Naive thymus-derived CD4-positive, alpha-beta T cell (primary cell): ENCODE measurements at regions of chr18 and their contacts with region 1.

Region 1: GRCh38 chr18:2758309-2758708 is 88.5 kb upstream of the EMILIN2 start:
- DNase-seq: no peak
- ATAC-seq: no peak
- H3K4me3 ChIP-seq: no peak overlapping the region
- H3K4me3 Mint-ChIP-seq: peak overlapping the region in 1 of 10 donors; percentile 16
- H3K27ac ChIP-seq: no peak overlapping the region
- H3K27ac Mint-ChIP-seq: peak overlapping the region in 7 of 9 donors; percentile 34 to 84 (median 69)
- H3K4me1 ChIP-seq: peaks cover 8 to 10% of the 10 kb centered on the region in 2 donors
- H3K4me1 Mint-ChIP-seq: peaks cover 11 to 36% (median 34%) of the 10 kb centered on the region in 7 donors
- H3K27me3 ChIP-seq: no peaks in the 10 kb centered on the region
- H3K27me3 Mint-ChIP-seq: no peaks in the 10 kb centered on the region

Region 2: DNA sequence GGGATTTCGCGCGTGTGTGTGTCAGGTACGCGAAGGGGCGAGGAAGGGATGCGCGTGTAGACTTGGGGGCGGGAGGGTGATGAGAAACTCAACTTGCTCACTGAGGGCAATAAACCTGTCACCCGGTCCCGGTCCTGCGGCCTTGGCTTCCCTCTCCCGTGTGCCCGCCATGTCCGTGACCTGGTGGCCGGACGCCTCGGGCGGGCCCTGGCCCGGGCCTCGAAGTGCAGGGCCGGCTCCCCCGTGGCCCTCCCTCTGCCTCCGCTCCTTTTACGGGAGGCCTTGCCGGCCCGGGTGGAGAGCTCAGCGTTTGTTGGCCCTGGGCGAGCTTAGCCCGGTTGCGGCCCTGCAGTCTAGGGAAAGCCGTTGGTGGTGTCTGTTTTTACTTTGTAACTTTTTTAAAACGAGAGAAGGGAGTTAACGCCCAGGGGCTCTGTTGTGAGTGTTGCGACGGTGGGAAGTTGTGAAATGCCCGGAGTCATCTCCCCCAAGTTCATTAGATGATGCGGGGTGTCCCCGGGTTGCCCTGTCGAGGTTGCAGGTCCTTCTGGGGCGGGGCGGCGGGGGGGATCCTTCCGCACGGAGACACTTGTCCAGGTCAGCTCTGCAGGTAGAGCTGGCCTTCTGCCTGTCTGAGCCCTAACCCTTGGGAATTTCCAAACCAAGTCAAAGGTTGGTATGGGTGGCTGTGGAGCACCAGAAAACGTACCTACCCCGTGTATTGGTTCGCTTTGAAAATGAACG is 101.9 kb before region 1 on chr18:
- CTCF ChIA-PET with region 1: no interaction called
- POLR2A ChIA-PET with region 1: no interaction called
- intact Hi-C with region 1: no loop called
- DNase-seq: peak in 7 of 9 donors; percentile 32 to 62 (median 54)
- ATAC-seq: peak; percentile 23
- H3K4me3 ChIP-seq: peak overlapping the region; percentile 97
- H3K4me3 Mint-ChIP-seq: peak overlapping the region; percentile 91 to 99 (median 95)
- H3K27ac ChIP-seq: peak overlapping the region; percentile 100
- H3K27ac Mint-ChIP-seq: peak overlapping the region; percentile 84 to 98 (median 94)
- H3K4me1 ChIP-seq: peaks cover 23 to 32% of the 10 kb centered on the region in 2 donors
- H3K4me1 Mint-ChIP-seq: peaks cover 26 to 66% (median 51%) of the 10 kb centered on the region in 7 donors
- H3K27me3 ChIP-seq: no peaks in the 10 kb centered on the region
- H3K27me3 Mint-ChIP-seq: no peaks in the 10 kb centered on the region

Region 3: DNA sequence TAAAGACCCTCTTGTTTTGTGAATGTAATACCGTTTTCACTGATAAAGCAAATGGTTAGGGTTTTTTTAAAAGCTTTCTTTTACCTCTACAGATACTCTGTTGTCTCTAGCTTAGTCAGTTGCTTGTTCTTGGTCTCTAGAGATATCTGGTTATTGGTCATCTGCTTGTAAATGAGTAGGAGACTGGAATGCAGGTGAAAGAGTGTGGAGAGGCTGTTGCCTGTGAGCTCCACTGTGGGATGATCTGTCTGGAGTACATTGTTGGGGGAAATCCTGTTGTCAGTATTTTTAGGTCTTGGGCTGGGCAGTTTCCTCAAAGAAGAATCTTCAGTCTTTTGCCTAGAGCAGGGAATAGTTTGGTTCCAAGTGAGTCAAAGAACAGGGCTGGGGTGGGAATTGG is 35.1 kb before region 1 on chr18:
- CTCF ChIA-PET with region 1: no interaction called
- POLR2A ChIA-PET with region 1: no interaction called
- intact Hi-C with region 1: loop called in 1 of 2 experiments (anchors 5 kb)
- DNase-seq: no peak
- ATAC-seq: no peak
- H3K4me3 ChIP-seq: no peak overlapping the region
- H3K4me3 Mint-ChIP-seq: peak overlapping the region in 1 of 10 donors; percentile 27
- H3K27ac ChIP-seq: no peak overlapping the region
- H3K27ac Mint-ChIP-seq: peak overlapping the region; percentile 36 to 91 (median 52)
- H3K4me1 ChIP-seq: peaks cover 0 to 5% of the 10 kb centered on the region in 2 donors
- H3K4me1 Mint-ChIP-seq: peaks cover 21 to 55% (median 46%) of the 10 kb centered on the region in 7 donors
- H3K27me3 ChIP-seq: no peaks in the 10 kb centered on the region
- H3K27me3 Mint-ChIP-seq: no peaks in the 10 kb centered on the region

Region 4: DNA sequence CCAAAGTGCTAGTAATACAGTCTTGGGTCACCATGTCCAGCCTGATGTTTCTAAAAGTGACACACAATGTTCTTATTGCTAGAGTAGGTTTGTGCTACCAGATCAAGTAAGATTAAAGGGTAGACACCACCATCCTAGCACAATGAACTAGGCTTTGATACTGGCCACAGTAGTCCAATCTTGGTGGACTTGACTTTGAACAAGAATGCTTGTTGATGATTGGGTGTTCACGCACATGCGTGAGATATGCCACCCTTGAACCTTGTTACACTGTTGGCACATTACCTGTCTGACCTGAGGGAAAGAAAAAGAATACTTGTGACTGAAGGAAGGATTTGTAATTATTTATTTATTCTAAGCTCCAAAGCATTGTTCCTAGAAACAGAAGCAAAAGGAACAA is 16.4 kb after region 1 on chr18:
- CTCF ChIA-PET with region 1: no interaction called
- POLR2A ChIA-PET with region 1: interaction called, 4 read pairs
- intact Hi-C with region 1: loop called in 1 of 2 experiments (anchors 2 kb)
- DNase-seq: no peak
- ATAC-seq: no peak
- H3K4me3 ChIP-seq: no peak overlapping the region
- H3K4me3 Mint-ChIP-seq: no peak overlapping the region
- H3K27ac ChIP-seq: no peak overlapping the region
- H3K27ac Mint-ChIP-seq: peak overlapping the region in 3 of 9 donors; percentile 5 to 78 (median 69)
- H3K4me1 ChIP-seq: no peaks in the 10 kb centered on the region
- H3K4me1 Mint-ChIP-seq: peaks cover 0 to 15% (median 3%) of the 10 kb centered on the region in 7 donors
- H3K27me3 ChIP-seq: no peaks in the 10 kb centered on the region
- H3K27me3 Mint-ChIP-seq: no peaks in the 10 kb centered on the region

Region 5: DNA sequence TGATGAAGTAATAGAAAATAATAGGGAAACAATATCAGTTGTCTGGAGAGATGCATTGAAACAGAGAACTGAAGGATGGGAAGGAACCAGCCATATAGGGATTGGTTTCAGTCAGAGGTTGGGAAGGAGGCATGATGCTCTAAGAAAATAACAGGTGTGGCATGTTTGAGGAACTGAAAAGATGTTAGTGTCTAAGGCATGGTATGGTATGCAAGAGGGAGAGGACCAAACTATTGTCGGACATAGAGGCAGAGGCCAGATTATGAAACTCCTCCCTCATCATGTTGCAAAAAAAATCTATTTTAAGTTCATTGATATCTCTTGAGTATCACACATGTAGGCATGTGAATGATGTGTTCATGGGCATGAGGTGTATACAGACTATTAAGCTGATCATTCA is 39.6 kb after region 1 on chr18:
- CTCF ChIA-PET with region 1: no interaction called
- POLR2A ChIA-PET with region 1: no interaction called
- intact Hi-C with region 1: loop called in 1 of 2 experiments (anchors 5 kb)
- DNase-seq: no peak
- ATAC-seq: no peak
- H3K4me3 ChIP-seq: no peak overlapping the region
- H3K4me3 Mint-ChIP-seq: no peak overlapping the region
- H3K27ac ChIP-seq: no peak overlapping the region
- H3K27ac Mint-ChIP-seq: peak overlapping the region in 3 of 9 donors; percentile 6 to 48 (median 41)
- H3K4me1 ChIP-seq: no peaks in the 10 kb centered on the region
- H3K4me1 Mint-ChIP-seq: peaks cover 3 to 21% (median 9%) of the 10 kb centered on the region in 7 donors
- H3K27me3 ChIP-seq: no peaks in the 10 kb centered on the region
- H3K27me3 Mint-ChIP-seq: no peaks in the 10 kb centered on the region

Region 6: DNA sequence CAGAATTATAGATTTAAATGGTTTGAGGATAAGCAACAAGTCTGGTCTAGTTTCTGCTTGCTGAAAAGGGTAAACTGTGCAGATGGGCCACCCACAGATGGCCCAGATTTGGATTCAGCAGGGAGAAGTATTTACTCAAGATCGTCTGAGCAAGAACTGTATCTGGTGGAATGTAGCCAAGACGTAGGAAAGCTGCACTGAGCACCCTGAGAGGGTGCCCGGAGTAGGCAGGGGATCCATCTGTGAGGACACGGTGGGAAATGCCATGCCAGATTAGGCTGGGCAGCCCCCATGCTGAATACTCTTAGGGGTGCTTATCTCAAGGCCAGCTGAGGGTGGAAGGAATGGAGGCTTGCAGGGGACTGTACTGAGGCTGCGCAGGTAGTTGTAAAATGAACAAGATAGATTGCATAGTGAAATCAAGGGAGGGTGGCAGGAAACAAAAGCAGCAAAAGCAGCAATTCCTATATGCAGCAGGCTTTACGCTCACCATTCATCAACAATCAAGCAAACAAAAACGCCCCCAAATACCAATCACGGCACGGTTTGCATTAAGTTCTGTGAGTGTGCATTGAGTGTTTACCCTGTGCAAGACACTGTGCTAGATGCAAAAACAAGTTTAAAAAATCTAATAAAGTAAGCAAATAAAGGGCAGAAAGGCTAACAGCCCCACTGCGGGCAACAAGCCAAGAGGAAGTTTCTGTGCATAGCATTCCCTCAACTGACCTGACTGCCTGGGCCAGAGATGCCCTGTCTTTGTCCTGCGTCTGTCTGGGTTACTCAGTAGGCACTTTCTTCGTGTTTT is 286.8 kb after region 1 on chr18:
- CTCF ChIA-PET with region 1: no interaction called
- POLR2A ChIA-PET with region 1: no interaction called
- intact Hi-C with region 1: no loop called
- DNase-seq: no peak
- ATAC-seq: no peak
- H3K4me3 ChIP-seq: no peak overlapping the region
- H3K4me3 Mint-ChIP-seq: peak overlapping the region in 5 of 10 donors; percentile 11 to 46 (median 28)
- H3K27ac ChIP-seq: no peak overlapping the region
- H3K27ac Mint-ChIP-seq: peak overlapping the region in 7 of 9 donors; percentile 14 to 85 (median 62)
- H3K4me1 ChIP-seq: peaks cover 0 to 7% of the 10 kb centered on the region in 2 donors
- H3K4me1 Mint-ChIP-seq: peaks cover 13 to 36% (median 29%) of the 10 kb centered on the region in 7 donors
- H3K27me3 ChIP-seq: no peaks in the 10 kb centered on the region
- H3K27me3 Mint-ChIP-seq: no peaks in the 10 kb centered on the region